ENCODE measurements at regions of chr10 and their contacts with region 1.

Region 1: GRCh38 chr10:114470956-114471905 is 66.9 kb upstream of the AFAP1L2 start:
- DNase-seq: peak; percentile 76
- ATAC-seq: peak; percentile 89
- H3K4me3 Mint-ChIP-seq: no peak overlapping the region
- H3K27ac Mint-ChIP-seq: peak overlapping the region; percentile 52
- H3K4me1 Mint-ChIP-seq: peaks cover 14% of the 10 kb centered on the region
- H3K27me3 Mint-ChIP-seq: no peaks in the 10 kb centered on the region

Region 2: DNA sequence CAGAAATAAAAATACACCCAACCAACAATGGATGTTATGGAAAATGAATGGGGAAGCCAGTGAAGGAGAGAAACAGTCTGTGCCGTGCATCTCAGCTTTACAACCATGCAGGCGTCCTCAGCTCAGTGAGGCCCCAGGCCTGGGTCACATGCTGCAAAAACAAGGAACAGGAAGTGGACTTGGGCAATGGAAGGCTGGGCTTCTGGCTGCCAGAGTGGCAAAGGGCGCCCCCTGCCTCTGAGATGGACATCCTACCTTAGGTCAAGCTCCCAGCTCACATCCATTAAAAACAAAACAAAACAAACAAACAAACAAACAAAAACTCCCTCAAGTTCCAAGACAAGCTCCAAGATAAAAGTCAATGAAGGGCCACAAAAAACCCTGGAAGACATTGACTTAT is 12.3 kb before region 1 on chr10:
- CTCF ChIA-PET with region 1: interaction called, 10 read pairs
- DNase-seq: peak; percentile 61
- ATAC-seq: peak; percentile 64
- H3K4me3 Mint-ChIP-seq: no peak overlapping the region
- H3K27ac Mint-ChIP-seq: no peak overlapping the region
- H3K4me1 Mint-ChIP-seq: peaks cover 10% of the 10 kb centered on the region
- H3K27me3 Mint-ChIP-seq: no peaks in the 10 kb centered on the region

Region 3: DNA sequence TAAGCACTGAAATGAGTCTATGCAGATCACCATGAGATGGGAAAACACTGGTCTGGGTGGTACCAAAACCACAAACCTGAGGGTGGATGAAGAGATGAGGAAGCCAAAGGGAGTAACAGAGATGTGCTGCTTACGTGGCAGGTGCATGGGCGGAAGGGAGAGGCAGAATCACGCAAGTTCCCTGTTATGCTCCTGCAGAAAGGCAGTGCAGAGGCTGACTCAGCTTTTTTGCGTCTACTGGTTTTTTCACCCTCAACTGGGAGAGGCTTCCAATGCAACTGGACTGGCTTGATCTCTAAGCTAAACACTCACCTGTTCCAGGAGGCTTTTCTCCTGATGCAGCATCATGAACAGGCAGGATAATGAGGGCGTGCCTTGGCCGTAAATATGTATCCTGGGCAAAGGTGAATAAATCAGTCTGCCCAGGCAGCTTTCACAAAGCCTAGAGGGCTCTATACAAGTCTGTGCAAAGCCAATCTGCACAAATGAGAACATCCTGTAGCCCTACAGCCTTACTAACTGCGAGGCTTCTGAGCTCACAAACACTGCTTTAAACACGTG is 28.5 kb after region 1 on chr10:
- CTCF ChIA-PET with region 1: interaction called, 12 read pairs
- DNase-seq: peak; percentile 69
- ATAC-seq: peak; percentile 72
- H3K4me3 Mint-ChIP-seq: peak overlapping the region; percentile 14
- H3K27ac Mint-ChIP-seq: peak overlapping the region; percentile 76
- H3K4me1 Mint-ChIP-seq: peaks cover 62% of the 10 kb centered on the region
- H3K27me3 Mint-ChIP-seq: no peaks in the 10 kb centered on the region

Region 4: GRCh38 chr10:114526504-114527238 is 55.4 kb after region 1 on chr10:
- CTCF ChIA-PET with region 1: interaction called, 40 read pairs
- DNase-seq: peak; percentile 95
- ATAC-seq: peak; percentile 98
- H3K4me3 Mint-ChIP-seq: peak overlapping the region; percentile 87
- H3K27ac Mint-ChIP-seq: peak overlapping the region; percentile 96
- H3K4me1 Mint-ChIP-seq: peaks cover 56% of the 10 kb centered on the region
- H3K27me3 Mint-ChIP-seq: no peaks in the 10 kb centered on the region

Region 5: GRCh38 chr10:114550756-114551635 is 79.8 kb after region 1 on chr10:
- CTCF ChIA-PET with region 1: interaction called, 93 read pairs
- DNase-seq: no peak
- ATAC-seq: no peak
- H3K4me3 Mint-ChIP-seq: no peak overlapping the region
- H3K27ac Mint-ChIP-seq: no peak overlapping the region
- H3K4me1 Mint-ChIP-seq: peaks cover 24% of the 10 kb centered on the region
- H3K27me3 Mint-ChIP-seq: no peaks in the 10 kb centered on the region

Region 6: DNA sequence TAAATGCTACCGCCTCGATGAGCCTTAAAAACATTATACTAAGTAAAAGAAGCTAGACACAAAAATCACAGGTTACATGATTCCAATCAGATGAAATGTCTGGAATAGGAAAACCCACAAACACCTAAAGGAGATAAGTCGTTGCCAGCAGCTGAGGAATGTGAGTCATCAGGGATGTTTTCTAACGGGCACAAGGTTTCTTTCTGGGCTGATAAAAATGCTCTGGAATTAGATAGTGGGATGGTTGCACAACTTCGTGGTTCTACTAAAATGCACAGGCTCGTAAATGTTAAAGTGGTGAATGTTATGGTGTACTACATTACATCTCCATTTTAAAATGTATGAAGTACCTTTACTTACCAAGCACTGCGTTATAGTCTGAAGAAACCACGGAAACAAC is 177.1 kb after region 1 on chr10:
- CTCF ChIA-PET with region 1: no interaction called
- DNase-seq: no peak
- ATAC-seq: no peak
- H3K4me3 Mint-ChIP-seq: no peak overlapping the region
- H3K27ac Mint-ChIP-seq: no peak overlapping the region
- H3K4me1 Mint-ChIP-seq: no peaks in the 10 kb centered on the region
- H3K27me3 Mint-ChIP-seq: peaks cover 3% of the 10 kb centered on the region

Region 7: GRCh38 chr10:114801411-114801813 is 330.2 kb after region 1 on chr10:
- CTCF ChIA-PET with region 1: no interaction called
- DNase-seq: peak; percentile 67
- ATAC-seq: peak; percentile 93
- H3K4me3 Mint-ChIP-seq: peak overlapping the region; percentile 58
- H3K27ac Mint-ChIP-seq: peak overlapping the region; percentile 87
- H3K4me1 Mint-ChIP-seq: peaks cover 29% of the 10 kb centered on the region
- H3K27me3 Mint-ChIP-seq: no peaks in the 10 kb centered on the region

Region 8: GRCh38 chr10:115129752-115130151 is 658.5 kb after region 1 on chr10:
- CTCF ChIA-PET with region 1: interaction called, 10 read pairs
- DNase-seq: no peak
- ATAC-seq: no peak
- H3K4me3 Mint-ChIP-seq: no peak overlapping the region
- H3K27ac Mint-ChIP-seq: no peak overlapping the region
- H3K4me1 Mint-ChIP-seq: no peaks in the 10 kb centered on the region
- H3K27me3 Mint-ChIP-seq: peaks cover 7% of the 10 kb centered on the region